ENCODE measurements at regions of chr18 and their contacts with region 1.

Region 1: DNA sequence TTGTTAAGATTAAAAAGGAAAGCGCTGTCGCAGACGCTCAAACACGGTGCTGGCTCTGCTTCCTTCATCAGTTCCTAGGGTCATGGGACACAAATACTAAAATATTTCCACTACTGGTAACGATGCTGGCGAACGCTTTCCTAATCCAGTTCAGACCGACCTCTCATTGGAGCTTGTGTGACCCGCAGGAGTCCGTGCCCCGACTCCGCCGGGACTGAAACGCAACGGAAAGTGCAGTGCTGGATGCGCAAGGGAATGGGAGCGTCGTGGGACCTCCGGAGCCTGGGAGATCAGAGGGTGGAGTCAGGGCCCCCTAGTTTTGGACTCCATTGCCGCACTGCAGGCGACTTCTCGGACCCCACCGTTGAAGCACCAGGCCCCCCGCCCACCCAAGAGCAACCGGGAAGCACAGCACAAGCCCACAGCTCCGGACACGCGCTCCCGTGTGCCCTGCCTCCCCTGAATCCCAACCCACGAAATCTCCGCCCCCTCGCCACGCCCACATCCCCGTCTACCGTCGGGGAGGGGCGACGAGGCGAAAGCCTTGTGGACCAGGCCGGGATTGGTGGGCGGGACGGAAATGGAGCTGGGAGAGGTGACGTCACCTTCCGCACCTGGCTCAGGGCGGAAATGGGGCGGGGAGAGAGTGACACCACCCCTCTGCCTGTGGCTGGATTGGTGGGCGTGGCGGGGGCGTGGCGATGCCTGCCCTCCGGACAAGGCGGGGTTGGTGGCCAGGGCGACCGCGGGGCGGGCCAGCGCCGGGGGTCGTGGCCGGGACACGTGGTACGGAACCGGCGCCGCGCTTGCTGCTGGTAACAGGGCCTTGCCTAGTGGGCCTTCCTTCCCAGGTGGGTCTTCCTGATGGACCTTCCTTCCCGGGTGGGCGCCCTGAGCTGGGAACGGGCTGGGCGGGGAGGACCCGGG is at the start of gene CNDP2:
- DNase-seq: peak; percentile 95 to 99
- ATAC-seq: peak; percentile 73 to 91 (median 82)
- H3K4me3 ChIP-seq: peak within 1 kb of the TSS; percentile 56
- H3K4me3 Mint-ChIP-seq: peak within 1 kb of the TSS; percentile 95
- H3K27ac ChIP-seq: peak within 1 kb of the TSS; percentile 81
- H3K27ac Mint-ChIP-seq: peak within 1 kb of the TSS; percentile 96 to 98
- H3K4me1 ChIP-seq: peaks cover 40% of the 10 kb centered on the region
- H3K4me1 Mint-ChIP-seq: peaks cover 42 to 44% of the 10 kb centered on the region in 2 donors
- H3K27me3 ChIP-seq: no peaks in the 10 kb centered on the region
- H3K27me3 Mint-ChIP-seq: no peaks in the 10 kb centered on the region
- CTCF ChIP-seq: no peak
- total RNA-seq, gene CNDP2: 147 to 167 (median 153) TPM

Region 2: GRCh38 chr18:74196220-74197119 is 299.4 kb before region 1 on chr18:
- intact Hi-C with region 1: loop called (anchors 1 kb)
- DNase-seq: peak in 1 of 2 donors; percentile 87
- ATAC-seq: peak; percentile 82 to 98 (median 97)
- H3K4me3 ChIP-seq: no peak overlapping the region
- H3K4me3 Mint-ChIP-seq: peak overlapping the region; percentile 79
- H3K27ac ChIP-seq: no peak overlapping the region
- H3K27ac Mint-ChIP-seq: peak overlapping the region; percentile 12 to 52
- H3K4me1 ChIP-seq: no peaks in the 10 kb centered on the region
- H3K4me1 Mint-ChIP-seq: peaks cover 6 to 8% of the 10 kb centered on the region in 2 donors
- H3K27me3 ChIP-seq: no peaks in the 10 kb centered on the region
- H3K27me3 Mint-ChIP-seq: peaks cover 0 to 3% of the 10 kb centered on the region in 2 donors
- CTCF ChIP-seq: peak; percentile 93

Region 3: GRCh38 chr18:74281639-74282358 is 214.0 kb before region 1 on chr18:
- intact Hi-C with region 1: no loop called
- DNase-seq: no peak
- ATAC-seq: no peak
- H3K4me3 ChIP-seq: no peak overlapping the region
- H3K4me3 Mint-ChIP-seq: no peak overlapping the region
- H3K27ac ChIP-seq: no peak overlapping the region
- H3K27ac Mint-ChIP-seq: peak overlapping the region in 1 of 2 donors; percentile 48
- H3K4me1 ChIP-seq: peaks cover 9% of the 10 kb centered on the region
- H3K4me1 Mint-ChIP-seq: peaks cover 20 to 27% of the 10 kb centered on the region in 2 donors
- H3K27me3 ChIP-seq: no peaks in the 10 kb centered on the region
- H3K27me3 Mint-ChIP-seq: no peaks in the 10 kb centered on the region
- CTCF ChIP-seq: no peak

Region 4: GRCh38 chr18:74310411-74310810 is 185.4 kb before region 1 on chr18:
- intact Hi-C with region 1: loop called (anchors 1 kb)
- DNase-seq: peak in 1 of 2 donors; percentile 59
- ATAC-seq: peak in 2 of 3 donors; percentile 55 to 70
- H3K4me3 ChIP-seq: no peak overlapping the region
- H3K4me3 Mint-ChIP-seq: no peak overlapping the region
- H3K27ac ChIP-seq: no peak overlapping the region
- H3K27ac Mint-ChIP-seq: no peak overlapping the region
- H3K4me1 ChIP-seq: no peaks in the 10 kb centered on the region
- H3K4me1 Mint-ChIP-seq: no peaks in the 10 kb centered on the region
- H3K27me3 ChIP-seq: peaks cover 6% of the 10 kb centered on the region
- H3K27me3 Mint-ChIP-seq: peaks cover 35 to 37% of the 10 kb centered on the region in 2 donors
- CTCF ChIP-seq: no peak

Region 5: DNA sequence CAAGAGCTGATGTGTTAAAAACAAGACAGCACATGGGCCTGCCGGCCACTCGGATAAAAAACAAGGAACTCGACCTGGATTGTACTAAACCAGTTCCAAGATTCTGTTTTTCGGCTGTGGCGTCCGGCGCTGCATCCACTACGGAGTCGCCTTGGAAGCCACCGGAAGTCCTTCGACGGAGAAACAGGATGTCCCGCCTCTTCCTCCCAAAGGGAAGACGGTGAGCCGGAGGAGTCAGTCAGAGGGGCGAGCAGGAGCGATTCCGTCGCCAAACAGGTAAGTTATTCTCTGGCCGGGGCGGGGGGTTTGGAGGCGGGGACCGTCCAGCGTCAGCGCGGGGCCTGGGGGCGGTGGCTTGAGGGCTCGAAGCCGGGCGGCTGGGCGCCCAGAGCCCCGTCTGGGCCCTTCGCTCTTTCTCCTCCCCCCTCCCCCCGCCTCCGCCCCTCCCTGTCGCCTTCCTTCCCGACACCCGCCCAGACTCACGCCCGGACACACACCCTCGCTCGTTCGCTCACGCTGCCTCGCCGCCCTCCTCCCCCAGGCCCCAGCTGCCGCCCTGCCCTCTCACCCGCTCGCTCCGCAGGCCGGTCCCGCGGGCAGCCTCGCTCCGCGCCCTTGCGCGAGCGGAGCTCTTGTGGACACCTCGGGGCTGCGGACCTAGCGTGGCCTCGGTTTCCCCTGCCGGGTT is 102.0 kb after region 1 on chr18 and contains the start of gene ZNF407:
- intact Hi-C with region 1: loop called (anchors 1 kb)
- DNase-seq: peak; percentile 85 to 94
- ATAC-seq: peak; percentile 72 to 88 (median 78)
- H3K4me3 ChIP-seq: peak within 1 kb of the TSS; percentile 95
- H3K4me3 Mint-ChIP-seq: peak within 1 kb of the TSS; percentile 93
- H3K27ac ChIP-seq: peak within 1 kb of the TSS; percentile 96
- H3K27ac Mint-ChIP-seq: peak within 1 kb of the TSS; percentile 94 to 95
- H3K4me1 ChIP-seq: peaks cover 14% of the 10 kb centered on the region
- H3K4me1 Mint-ChIP-seq: peaks cover 58 to 65% of the 10 kb centered on the region in 2 donors
- H3K27me3 ChIP-seq: no peaks in the 10 kb centered on the region
- H3K27me3 Mint-ChIP-seq: no peaks in the 10 kb centered on the region
- CTCF ChIP-seq: no peak
- total RNA-seq, gene ZNF407: 28.4 to 36.7 (median 36.3) TPM